Dorsolateral prefrontal cortex (tissue), 120 donors: ENCODE measurements at regions of chr17 and their contacts with region 1.

Region 1: DNA sequence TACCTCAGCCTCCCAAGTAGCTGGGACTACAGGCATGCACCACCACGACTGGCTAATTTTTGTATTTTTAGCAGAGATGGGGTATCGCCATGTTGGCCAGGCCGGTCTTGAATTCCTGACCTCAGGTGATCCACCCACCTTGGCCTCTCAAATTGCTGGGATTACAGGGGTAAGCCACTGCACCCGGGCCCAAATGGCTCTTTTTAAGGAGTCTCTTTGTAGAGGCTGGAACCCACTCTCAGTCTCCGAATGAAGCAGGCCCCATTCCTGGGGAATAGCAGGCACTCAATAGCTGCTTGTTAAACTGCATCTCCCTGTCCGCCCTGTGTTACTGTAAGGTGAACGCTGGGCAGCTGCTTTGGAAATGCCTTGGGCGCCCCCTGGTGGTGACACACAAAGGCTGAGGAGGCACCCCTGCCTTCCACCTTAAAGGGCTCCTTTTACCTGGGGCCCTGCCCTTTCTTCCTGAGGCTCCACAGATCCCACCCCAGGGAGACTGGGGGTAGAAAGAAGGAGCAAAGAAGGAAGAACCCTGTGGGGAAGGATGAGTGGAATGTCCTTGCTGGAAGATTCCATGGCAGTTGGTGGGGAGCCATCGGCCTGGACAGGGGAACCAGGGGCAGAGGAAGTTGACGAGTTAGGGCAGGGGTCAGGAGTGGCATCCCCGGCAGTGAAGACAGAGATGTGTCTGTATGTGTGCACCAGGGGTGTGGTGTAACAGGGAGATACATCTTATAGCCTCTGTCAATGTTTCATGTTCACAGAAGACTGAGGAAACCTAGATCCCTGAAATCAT is 6.1 kb upstream of the SP2 start:
- DNase-seq: peak; percentile 84 to 92 (median 88)
- H3K4me3 ChIP-seq: no peak overlapping the region
- H3K27ac ChIP-seq: no peak overlapping the region
- H3K27me3 ChIP-seq: no peaks in the 10 kb centered on the region
- CTCF ChIP-seq: peak; percentile 86 to 99 (median 97)

Region 2: DNA sequence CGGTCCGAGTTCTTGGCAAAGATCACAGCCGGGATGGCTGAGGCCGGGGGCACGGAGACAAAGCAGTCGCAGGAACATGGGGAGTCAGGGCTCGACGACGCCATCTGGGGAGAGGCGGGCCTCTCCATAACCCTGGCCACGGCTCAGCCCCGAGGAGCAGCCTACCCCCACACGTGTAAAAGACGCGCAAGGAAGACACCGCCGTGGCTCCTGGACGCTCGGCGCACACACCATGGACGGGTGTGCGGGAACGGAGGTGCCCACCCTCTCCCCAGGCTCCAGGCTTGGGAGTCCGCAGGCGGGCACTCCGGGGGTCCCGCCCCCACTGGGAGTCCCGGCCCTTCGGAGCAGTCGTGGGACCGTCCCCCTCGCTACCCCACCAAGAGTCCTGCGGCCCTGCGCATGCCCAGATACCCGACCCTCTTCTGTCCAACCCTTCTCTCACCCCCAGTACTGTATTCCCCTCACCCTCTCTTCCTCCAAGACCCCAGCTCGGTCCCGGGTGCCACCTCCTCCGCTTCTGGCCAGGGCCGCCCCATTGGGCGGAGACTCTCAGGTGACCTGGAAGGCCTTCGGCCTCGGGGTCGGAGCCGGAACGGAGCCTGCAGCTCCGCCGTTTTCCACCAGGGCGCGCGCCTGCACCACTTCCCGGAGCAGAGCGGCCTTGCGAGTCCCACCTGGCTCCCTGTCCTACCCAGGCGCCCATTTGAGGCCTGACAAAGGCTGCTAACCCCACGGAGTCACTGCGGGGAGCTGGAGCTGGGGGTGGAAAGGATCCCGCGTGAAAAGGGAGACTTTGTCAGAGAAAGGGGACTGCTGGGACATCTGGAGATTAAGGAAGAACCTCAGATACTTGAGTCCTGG is 49.0 kb before region 1 on chr17 and contains the start of gene SCRN2:
- intact Hi-C with region 1: loop called (anchors 1 kb)
- DNase-seq: peak; percentile 78 to 93 (median 86)
- H3K4me3 ChIP-seq: peak within 1 kb of the TSS; percentile 53 to 97 (median 80)
- H3K27ac ChIP-seq: peak within 1 kb of the TSS in 54 of 59 donors; percentile 1 to 88 (median 66)
- H3K27me3 ChIP-seq: peaks cover 0 to 16% (median under 1%) of the 10 kb centered on the region in 45 donors
- CTCF ChIP-seq: peak; percentile 75 to 99 (median 96)
- total RNA-seq, gene SCRN2: 18.1 to 42.2 (median 27.6) TPM

Region 3: GRCh38 chr17:47846716-47847340 is 43.1 kb before region 1 on chr17:
- intact Hi-C with region 1: loop called (anchors 1 kb)
- DNase-seq: no peak
- H3K4me3 ChIP-seq: peak overlapping the region in 5 of 59 donors; percentile 6 to 20 (median 12)
- H3K27ac ChIP-seq: no peak overlapping the region
- H3K27me3 ChIP-seq: peaks cover 1 to 73% (median 55%) of the 10 kb centered on the region in 45 donors
- CTCF ChIP-seq: no peak

Region 4: GRCh38 chr17:48636177-48637018 is 746.5 kb after region 1 on chr17:
- intact Hi-C with region 1: no loop called
- DNase-seq: peak in 1 of 10 donors; percentile 11
- H3K4me3 ChIP-seq: no peak overlapping the region
- H3K27ac ChIP-seq: no peak overlapping the region
- H3K27me3 ChIP-seq: peaks cover 24 to 100% (median 100%) of the 10 kb centered on the region in 45 donors
- CTCF ChIP-seq: peak in 28 of 56 donors; percentile 9 to 48 (median 20)